Aorta (tissue), 5 donors: ENCODE measurements at regions of chr10 and their contacts with region 1.

Region 1: GRCh38 chr10:118568327-118568848 is 27.1 kb downstream of the PRLHR start:
- DNase-seq: no peak
- ATAC-seq: peak; percentile 73
- H3K4me3 ChIP-seq: no peak overlapping the region
- H3K27ac ChIP-seq: no peak overlapping the region
- H3K4me1 ChIP-seq: no peaks in the 10 kb centered on the region
- H3K27me3 ChIP-seq: no peaks in the 10 kb centered on the region

Region 2: GRCh38 chr10:118720685-118721538 is 152.5 kb after region 1 on chr10:
- intact Hi-C with region 1: loop called (anchors 1 to 2 kb)
- DNase-seq: no peak
- ATAC-seq: no peak
- H3K4me3 ChIP-seq: no peak overlapping the region
- H3K27ac ChIP-seq: no peak overlapping the region
- H3K4me1 ChIP-seq: no peaks in the 10 kb centered on the region
- H3K27me3 ChIP-seq: no peaks in the 10 kb centered on the region

Region 3: GRCh38 chr10:118800920-118801319 is 232.5 kb after region 1 on chr10:
- intact Hi-C with region 1: loop called (anchors 10 kb)
- DNase-seq: no peak
- ATAC-seq: no peak
- H3K4me3 ChIP-seq: no peak overlapping the region
- H3K27ac ChIP-seq: no peak overlapping the region
- H3K4me1 ChIP-seq: no peaks in the 10 kb centered on the region
- H3K27me3 ChIP-seq: no peaks in the 10 kb centered on the region

Region 4: GRCh38 chr10:119207367-119207668 is 638.9 kb after region 1 on chr10 and contains the start of gene GRK5:
- intact Hi-C with region 1: no loop called
- DNase-seq: peak; percentile 97
- ATAC-seq: peak; percentile 95
- H3K4me3 ChIP-seq: peak within 1 kb of the TSS; percentile 89 to 95
- H3K27ac ChIP-seq: peak within 1 kb of the TSS; percentile 80 to 91
- H3K4me1 ChIP-seq: peaks cover 0 to 6% of the 10 kb centered on the region in 2 donors
- H3K27me3 ChIP-seq: no peaks in the 10 kb centered on the region
- total RNA-seq, gene GRK5: 73.8 to 112 TPM